ENCODE measurements at regions of chr3 and their contacts with region 1.

Region 1: DNA sequence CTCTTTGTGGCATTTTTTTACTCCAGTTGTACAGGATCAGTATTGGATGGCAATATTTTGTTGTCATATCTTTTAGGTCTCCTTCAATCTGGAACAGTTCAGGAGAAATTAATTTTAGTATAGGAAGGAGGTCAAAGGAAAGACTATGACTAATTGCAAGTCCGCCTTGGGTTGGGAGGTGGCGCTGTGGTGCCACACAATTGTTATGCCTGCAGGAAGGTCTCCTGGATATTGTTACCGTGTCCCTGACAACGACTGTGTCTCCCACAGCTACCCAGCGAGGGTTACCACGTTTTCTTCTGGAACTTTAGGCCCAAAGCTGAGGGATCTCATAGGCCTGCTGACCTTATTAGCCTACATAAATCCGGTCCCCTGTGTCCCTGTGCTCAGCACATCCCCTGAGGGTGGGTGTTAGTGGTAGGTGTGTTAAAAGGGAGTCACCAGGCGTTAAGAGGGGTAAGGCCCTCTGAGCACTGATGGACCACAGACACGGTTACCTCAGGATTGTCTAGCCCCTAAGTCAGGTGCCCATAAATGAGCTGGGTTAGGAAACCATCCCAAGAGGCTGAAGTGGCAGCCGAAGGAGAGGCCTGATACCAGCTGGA is 31.5 kb downstream of the KCNAB1 start:
- DNase-seq: peak; percentile 16
- H3K4me3 ChIP-seq: no peak overlapping the region
- H3K27ac ChIP-seq: no peak overlapping the region
- H3K27me3 ChIP-seq: no peaks in the 10 kb centered on the region
- CTCF ChIP-seq: peak; percentile 78

Region 2: DNA sequence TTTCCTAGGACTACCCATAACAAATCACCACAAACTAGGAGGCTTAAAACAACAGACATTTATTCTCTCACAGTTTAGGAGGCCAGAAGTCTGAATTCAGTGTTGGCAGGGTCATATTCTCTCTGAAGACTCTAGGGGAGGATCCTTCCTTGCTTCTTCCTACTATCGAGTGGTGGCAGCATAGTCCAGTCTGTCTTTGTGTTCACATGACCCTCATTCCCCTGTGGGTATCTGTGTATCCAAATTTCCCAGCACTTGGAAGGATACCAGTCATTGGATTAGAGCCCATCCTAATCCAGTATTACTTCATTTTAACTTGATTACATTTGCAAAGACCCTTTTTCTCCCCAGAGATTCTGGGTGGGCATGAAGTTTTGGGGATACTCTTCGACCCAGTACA is 217.7 kb before region 1 on chr3:
- CTCF ChIA-PET with region 1: no interaction called
- POLR2A ChIA-PET with region 1: no interaction called
- DNase-seq: no peak
- H3K4me3 ChIP-seq: no peak overlapping the region
- H3K27ac ChIP-seq: no peak overlapping the region
- H3K27me3 ChIP-seq: no peaks in the 10 kb centered on the region
- CTCF ChIP-seq: no peak

Region 3: GRCh38 chr3:156140001-156140595 is 11.8 kb before region 1 on chr3:
- CTCF ChIA-PET with region 1: interaction called, 17 read pairs
- POLR2A ChIA-PET with region 1: no interaction called
- DNase-seq: no peak
- H3K4me3 ChIP-seq: no peak overlapping the region
- H3K27ac ChIP-seq: no peak overlapping the region
- H3K27me3 ChIP-seq: peaks cover 6% of the 10 kb centered on the region
- CTCF ChIP-seq: no peak

Region 4: GRCh38 chr3:156382458-156383346 is 230.8 kb after region 1 on chr3:
- CTCF ChIA-PET with region 1: interaction called, 162 read pairs
- POLR2A ChIA-PET with region 1: interaction called, 6 read pairs
- DNase-seq: no peak
- H3K4me3 ChIP-seq: no peak overlapping the region
- H3K27ac ChIP-seq: no peak overlapping the region
- H3K27me3 ChIP-seq: peaks cover 11% of the 10 kb centered on the region
- CTCF ChIP-seq: peak; percentile 84

Region 5: DNA sequence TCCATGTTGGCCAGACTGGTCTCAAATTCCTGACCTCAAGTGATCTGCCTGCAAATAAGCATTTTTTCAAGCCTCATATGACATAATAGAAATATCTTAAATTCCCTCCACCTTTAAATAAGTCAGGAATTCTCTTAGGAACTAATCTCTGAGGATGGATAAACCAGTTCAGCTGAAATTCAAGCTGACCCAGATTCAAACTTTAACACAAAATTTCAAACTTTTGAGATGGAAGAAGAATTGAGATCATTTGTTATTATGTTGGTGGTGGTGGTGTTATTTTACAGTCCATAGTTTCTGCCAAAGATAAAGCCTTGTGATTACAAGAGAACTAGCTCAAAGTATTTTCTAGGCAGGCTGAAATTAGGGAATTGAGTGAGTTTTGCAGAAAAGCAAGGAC is 317.5 kb after region 1 on chr3:
- CTCF ChIA-PET with region 1: interaction called, 14 read pairs
- POLR2A ChIA-PET with region 1: no interaction called
- DNase-seq: no peak
- H3K4me3 ChIP-seq: no peak overlapping the region
- H3K27ac ChIP-seq: no peak overlapping the region
- H3K27me3 ChIP-seq: peaks cover 2% of the 10 kb centered on the region
- CTCF ChIP-seq: no peak

Region 6: GRCh38 chr3:156509189-156510174 is 357.6 kb after region 1 on chr3:
- CTCF ChIA-PET with region 1: interaction called, 204 read pairs
- POLR2A ChIA-PET with region 1: no interaction called
- DNase-seq: peak; percentile 34
- H3K4me3 ChIP-seq: no peak overlapping the region
- H3K27ac ChIP-seq: no peak overlapping the region
- H3K27me3 ChIP-seq: no peaks in the 10 kb centered on the region
- CTCF ChIP-seq: peak; percentile 60

Region 7: GRCh38 chr3:156542715-156543555 is 391.0 kb after region 1 on chr3:
- CTCF ChIA-PET with region 1: interaction called, 38 read pairs
- POLR2A ChIA-PET with region 1: no interaction called
- DNase-seq: no peak
- H3K4me3 ChIP-seq: no peak overlapping the region
- H3K27ac ChIP-seq: no peak overlapping the region
- H3K27me3 ChIP-seq: no peaks in the 10 kb centered on the region
- CTCF ChIP-seq: no peak